ENCODE measurements at regions of chr12 and their contacts with region 1.

Region 1: GRCh38 chr12:100142851-100143559 is at the start of gene BLTP3B:
- DNase-seq: peak; percentile 94
- H3K4me3 ChIP-seq: peak within 1 kb of the TSS; percentile 74 to 99 (median 90)
- H3K27ac ChIP-seq: peak within 1 kb of the TSS; percentile 96 to 99 (median 98)
- H3K4me1 ChIP-seq: peaks cover 8 to 42% (median 17%) of the 10 kb centered on the region in 4 donors
- H3K27me3 ChIP-seq: no peaks in the 10 kb centered on the region
- CTCF ChIP-seq: no peak
- EP300 ChIP-seq: no peak
- POLR2A ChIP-seq: no peak
- total RNA-seq, gene BLTP3B: 3.8 to 44.1 (median 31.5) TPM

Region 2: DNA sequence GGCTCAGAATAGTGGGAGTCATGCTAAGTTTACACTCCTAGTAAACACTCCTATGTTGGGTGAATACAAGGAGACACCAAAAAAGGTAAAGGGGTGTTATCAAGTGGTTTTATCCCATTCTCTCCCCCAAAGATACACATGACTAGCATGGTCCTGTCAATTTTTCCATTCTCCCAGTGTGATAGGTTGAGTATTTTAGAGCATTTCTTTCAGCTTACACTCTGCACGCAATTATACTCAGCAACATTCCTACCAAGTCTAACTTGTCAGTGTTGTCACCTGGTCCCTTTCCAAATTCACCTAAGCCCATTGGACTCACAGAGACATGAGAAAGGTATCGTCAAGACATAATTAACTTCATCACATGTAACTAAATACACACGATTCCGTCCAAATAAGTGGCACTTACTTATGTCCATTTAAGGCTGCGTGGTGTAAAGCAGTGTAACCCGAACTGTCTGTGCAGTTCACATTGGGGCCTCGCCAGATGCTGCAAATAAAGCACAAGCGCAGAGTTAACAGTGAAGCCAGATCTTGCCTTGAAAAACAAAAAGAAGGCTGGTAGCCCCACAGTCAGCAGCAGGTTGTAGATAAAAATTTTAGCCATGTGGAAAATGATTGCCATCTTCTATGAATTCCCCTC is 318.0 kb before region 1 on chr12:
- in situ Hi-C with region 1: no loop called
- intact Hi-C with region 1: no loop called
- DNase-seq: no peak
- H3K4me3 ChIP-seq: no peak overlapping the region
- H3K27ac ChIP-seq: peak overlapping the region in 1 of 4 donors; percentile 2
- H3K4me1 ChIP-seq: no peaks in the 10 kb centered on the region
- H3K27me3 ChIP-seq: no peaks in the 10 kb centered on the region
- CTCF ChIP-seq: no peak
- EP300 ChIP-seq: no peak
- POLR2A ChIP-seq: no peak

Region 3: DNA sequence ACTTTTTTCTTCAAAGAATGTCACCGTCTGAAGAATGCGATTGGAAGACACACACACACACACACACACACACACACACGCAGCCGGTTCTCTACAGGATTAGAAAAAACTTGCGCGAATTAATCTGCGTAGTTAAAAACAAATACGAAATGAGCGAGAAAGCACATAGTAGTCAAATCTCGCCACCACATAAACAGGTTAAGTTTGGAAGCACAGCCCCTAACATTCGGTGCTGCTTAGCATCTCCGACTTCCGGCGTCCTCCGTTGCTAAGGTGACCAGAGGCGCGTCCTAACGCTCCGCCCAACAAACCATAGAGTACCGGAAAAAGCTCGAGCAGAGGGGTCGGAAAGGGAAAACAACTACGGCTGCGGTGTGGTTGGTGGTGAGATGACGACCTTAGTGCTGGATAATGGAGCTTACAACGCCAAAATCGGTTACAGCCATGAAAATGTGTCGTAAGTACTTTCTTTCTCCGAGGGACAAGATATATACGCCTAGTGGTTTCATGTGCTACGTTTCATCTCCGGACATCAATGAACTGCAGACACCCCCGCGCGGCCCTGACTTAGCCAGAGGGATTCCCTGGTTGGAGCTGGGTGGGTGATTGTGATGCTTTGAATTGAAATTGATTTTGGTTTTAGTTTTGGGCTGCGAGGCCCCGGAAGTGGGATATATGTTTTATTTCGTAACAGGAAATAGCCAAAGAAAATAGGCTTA is 57.6 kb after region 1 on chr12 and contains the start of gene ACTR6:
- in situ Hi-C with region 1: no loop called
- intact Hi-C with region 1: loop called (anchors 5 kb)
- DNase-seq: peak; percentile 97
- H3K4me3 ChIP-seq: peak within 1 kb of the TSS; percentile 66 to 98 (median 82)
- H3K27ac ChIP-seq: peak within 1 kb of the TSS; percentile 90 to 97 (median 92)
- H3K4me1 ChIP-seq: peaks cover 13 to 33% (median 19%) of the 10 kb centered on the region in 4 donors
- H3K27me3 ChIP-seq: no peaks in the 10 kb centered on the region
- CTCF ChIP-seq: peak in 1 of 5 experiments; percentile 33
- EP300 ChIP-seq: no peak
- POLR2A ChIP-seq: peak; percentile 69
- total RNA-seq, gene ACTR6: 4.9 to 35.0 (median 13.7) TPM